ENCODE measurements at regions of chr20 and their contacts with region 1.

Region 1: GRCh38 chr20:61369731-61370520 is 117.9 kb downstream of the CDH4 start:
- DNase-seq: no peak
- ATAC-seq: no peak
- H3K4me3 ChIP-seq: no peak overlapping the region
- H3K27ac ChIP-seq: no peak overlapping the region
- H3K4me1 ChIP-seq: no peaks in the 10 kb centered on the region
- H3K27me3 ChIP-seq: no peaks in the 10 kb centered on the region
- CTCF ChIP-seq: no peak
- POLR2A ChIP-seq: no peak

Region 2: DNA sequence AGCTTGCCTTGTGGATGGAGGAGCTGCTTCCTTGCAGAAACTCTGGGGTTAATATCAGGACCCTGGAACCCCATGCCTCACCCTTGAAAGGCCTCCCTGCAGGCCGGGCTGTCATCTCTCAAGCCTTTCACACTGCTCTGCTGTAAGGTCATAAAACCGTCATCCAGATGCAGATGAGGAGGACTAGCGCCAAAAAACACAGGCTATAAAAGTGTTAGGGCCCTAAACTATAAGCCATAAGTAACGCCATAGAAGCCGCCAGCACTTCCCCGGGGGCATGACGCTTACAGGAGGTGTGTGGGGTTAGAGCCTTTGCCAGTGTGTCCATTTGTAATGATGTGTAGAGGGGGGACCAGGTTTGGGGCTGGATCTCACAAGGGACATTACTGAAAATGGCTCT is 70.3 kb before region 1 on chr20:
- intact Hi-C with region 1: loop called in 1 of 2 experiments (anchors 10 kb)
- DNase-seq: no peak
- ATAC-seq: no peak
- H3K4me3 ChIP-seq: no peak overlapping the region
- H3K27ac ChIP-seq: no peak overlapping the region
- H3K4me1 ChIP-seq: no peaks in the 10 kb centered on the region
- H3K27me3 ChIP-seq: no peaks in the 10 kb centered on the region
- CTCF ChIP-seq: no peak
- POLR2A ChIP-seq: no peak